Natural killer cell (primary cell): ENCODE measurements at regions of chr19 and their contacts with region 1.

Region 1: GRCh38 chr19:2457394-2458037 is 757 bp upstream of the LMNB2 start:
- DNase-seq: no peak
- ATAC-seq: no peak
- H3K4me3 ChIP-seq: no peak overlapping the region
- H3K4me3 Mint-ChIP-seq: peak overlapping the region; percentile 79
- H3K27ac ChIP-seq: peak overlapping the region; percentile 36
- H3K27ac Mint-ChIP-seq: peak overlapping the region; percentile 84 to 91
- H3K4me1 ChIP-seq: peaks cover 30% of the 10 kb centered on the region
- H3K4me1 Mint-ChIP-seq: peaks cover 0 to 34% of the 10 kb centered on the region in 2 donors
- H3K27me3 ChIP-seq: peaks cover 3% of the 10 kb centered on the region
- H3K27me3 Mint-ChIP-seq: peaks cover 0 to 6% of the 10 kb centered on the region in 2 donors
- CTCF ChIP-seq: no peak

Region 2: DNA sequence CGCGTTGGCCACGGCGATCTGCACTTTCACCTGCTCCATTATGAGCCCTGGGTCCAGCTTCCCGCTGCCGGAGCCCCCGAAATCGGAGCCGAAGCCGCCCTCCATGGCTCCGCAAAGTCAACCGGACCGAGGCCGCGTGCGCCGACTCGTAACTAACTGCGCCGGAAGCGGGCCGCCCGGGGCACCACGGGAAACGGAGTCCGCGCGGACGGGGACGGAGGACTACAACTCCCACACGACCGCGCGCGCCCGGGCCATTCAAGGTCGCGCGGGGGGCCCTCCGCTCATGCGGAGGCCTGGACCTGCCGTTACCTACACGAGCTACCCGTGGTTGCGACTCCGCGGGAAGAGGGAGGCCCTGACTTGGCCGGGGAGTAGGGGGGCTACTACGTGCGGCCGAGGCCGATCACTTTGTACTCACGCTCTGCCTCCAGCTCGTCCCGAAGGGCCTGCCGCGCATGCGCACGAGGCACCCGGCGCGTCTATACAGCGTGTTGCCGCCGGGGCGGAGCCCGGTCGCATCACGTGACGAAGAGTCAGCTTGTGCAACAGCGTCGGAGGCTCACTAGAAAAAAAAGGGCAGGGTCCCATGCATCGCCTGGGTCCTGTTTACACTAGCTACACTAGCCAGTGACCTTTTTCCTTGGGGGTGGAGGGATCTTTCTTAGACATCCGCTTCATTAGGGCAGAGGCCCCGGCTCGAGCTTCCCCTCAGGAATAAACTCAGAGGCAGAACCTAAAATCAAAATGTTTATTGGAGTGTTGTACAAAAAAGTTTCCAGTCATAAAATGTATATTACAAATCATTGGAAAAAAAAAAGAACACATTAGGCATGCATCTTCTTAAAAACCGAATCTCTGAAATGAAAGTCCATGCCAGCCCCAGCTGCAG is 29.8 kb before region 1 on chr19 and contains the start of gene TIMM13:
- intact Hi-C with region 1: loop called (anchors 1 kb)
- DNase-seq: peak; percentile 98 to 99
- ATAC-seq: peak; percentile 93 to 96 (median 96)
- H3K4me3 ChIP-seq: peak within 1 kb of the TSS; percentile 73
- H3K4me3 Mint-ChIP-seq: peak within 1 kb of the TSS; percentile 97
- H3K27ac ChIP-seq: peak within 1 kb of the TSS; percentile 86
- H3K27ac Mint-ChIP-seq: peak within 1 kb of the TSS; percentile 96 to 98
- H3K4me1 ChIP-seq: peaks cover 23% of the 10 kb centered on the region
- H3K4me1 Mint-ChIP-seq: peaks cover 10 to 14% of the 10 kb centered on the region in 2 donors
- H3K27me3 ChIP-seq: no peaks in the 10 kb centered on the region
- H3K27me3 Mint-ChIP-seq: no peaks in the 10 kb centered on the region
- CTCF ChIP-seq: no peak
- total RNA-seq, gene TIMM13: 24.7 to 30.4 (median 25.1) TPM